ENCODE measurements at regions of chr12 and their contacts with region 1.

Region 1: GRCh38 chr12:7970475-7971252 is 34.7 kb upstream of the SLC2A3 start:
- DNase-seq: peak; percentile 92
- ATAC-seq: peak; percentile 87
- H3K4me3 Mint-ChIP-seq: peak overlapping the region; percentile 76
- H3K27ac Mint-ChIP-seq: peak overlapping the region; percentile 94
- H3K4me1 Mint-ChIP-seq: peaks cover 26% of the 10 kb centered on the region
- H3K27me3 Mint-ChIP-seq: no peaks in the 10 kb centered on the region
- CTCF ChIP-seq: peak; percentile 47

Region 2: GRCh38 chr12:7948589-7949260 is 21.9 kb before region 1 on chr12:
- CTCF ChIA-PET with region 1: no interaction called
- POLR2A ChIA-PET with region 1: no interaction called
- intact Hi-C with region 1: no loop called
- DNase-seq: no peak
- ATAC-seq: no peak
- H3K4me3 Mint-ChIP-seq: no peak overlapping the region
- H3K27ac Mint-ChIP-seq: no peak overlapping the region
- H3K4me1 Mint-ChIP-seq: peaks cover 4% of the 10 kb centered on the region
- H3K27me3 Mint-ChIP-seq: no peaks in the 10 kb centered on the region
- CTCF ChIP-seq: no peak

Region 3: GRCh38 chr12:7959701-7960121 is 11.0 kb before region 1 on chr12:
- CTCF ChIA-PET with region 1: interaction called, 20 read pairs
- POLR2A ChIA-PET with region 1: interaction called, 34 read pairs
- intact Hi-C with region 1: no loop called
- DNase-seq: peak; percentile 63
- ATAC-seq: peak; percentile 43
- H3K4me3 Mint-ChIP-seq: peak overlapping the region; percentile 97
- H3K27ac Mint-ChIP-seq: peak overlapping the region; percentile 98
- H3K4me1 Mint-ChIP-seq: peaks cover 35% of the 10 kb centered on the region
- H3K27me3 Mint-ChIP-seq: no peaks in the 10 kb centered on the region
- CTCF ChIP-seq: no peak

Region 4: GRCh38 chr12:7989827-7990551 is 19.3 kb after region 1 on chr12:
- CTCF ChIA-PET with region 1: interaction called, 13 read pairs
- POLR2A ChIA-PET with region 1: interaction called, 11 read pairs
- intact Hi-C with region 1: no loop called
- DNase-seq: peak; percentile 93
- ATAC-seq: peak; percentile 94
- H3K4me3 Mint-ChIP-seq: peak overlapping the region; percentile 51
- H3K27ac Mint-ChIP-seq: peak overlapping the region; percentile 84
- H3K4me1 Mint-ChIP-seq: peaks cover 34% of the 10 kb centered on the region
- H3K27me3 Mint-ChIP-seq: no peaks in the 10 kb centered on the region
- CTCF ChIP-seq: no peak

Region 5: DNA sequence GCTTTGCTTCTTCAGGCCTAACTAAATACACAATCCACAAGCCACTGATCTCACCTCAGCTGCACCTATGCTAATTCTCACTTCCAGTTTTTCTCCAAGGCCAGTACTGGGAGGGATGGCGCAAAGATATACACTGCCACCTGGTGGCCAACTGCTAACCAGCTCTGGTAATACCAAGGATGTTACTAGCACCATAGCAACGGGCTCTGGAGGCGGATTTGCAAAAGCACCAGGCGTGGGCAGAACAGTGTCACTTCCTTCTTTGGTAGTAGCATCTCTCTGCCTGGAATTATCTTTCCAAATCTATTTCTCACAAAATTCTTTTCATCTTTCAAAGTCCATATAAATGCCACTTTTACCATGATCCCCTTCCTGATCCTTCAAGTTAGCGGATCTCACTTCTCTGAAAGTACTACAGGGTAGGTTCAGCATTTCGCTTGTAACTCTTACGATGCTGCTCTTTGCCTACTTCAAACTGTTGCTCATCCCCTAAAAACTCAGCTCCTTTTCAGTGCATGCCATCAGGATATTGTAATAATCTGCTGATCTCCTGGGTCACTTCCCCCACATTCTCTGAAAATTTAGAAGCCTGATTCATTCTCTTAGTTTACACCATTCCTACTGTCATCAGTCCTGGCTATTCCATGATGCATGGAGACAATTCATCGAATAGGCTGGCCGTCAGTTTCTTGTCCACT is 24.8 kb after region 1 on chr12:
- CTCF ChIA-PET with region 1: interaction called, 13 read pairs
- POLR2A ChIA-PET with region 1: interaction called, 11 read pairs
- intact Hi-C with region 1: no loop called
- DNase-seq: peak; percentile 96
- ATAC-seq: peak; percentile 90
- H3K4me3 Mint-ChIP-seq: no peak overlapping the region
- H3K27ac Mint-ChIP-seq: no peak overlapping the region
- H3K4me1 Mint-ChIP-seq: peaks cover 22% of the 10 kb centered on the region
- H3K27me3 Mint-ChIP-seq: no peaks in the 10 kb centered on the region
- CTCF ChIP-seq: peak; percentile 82

Region 6: DNA sequence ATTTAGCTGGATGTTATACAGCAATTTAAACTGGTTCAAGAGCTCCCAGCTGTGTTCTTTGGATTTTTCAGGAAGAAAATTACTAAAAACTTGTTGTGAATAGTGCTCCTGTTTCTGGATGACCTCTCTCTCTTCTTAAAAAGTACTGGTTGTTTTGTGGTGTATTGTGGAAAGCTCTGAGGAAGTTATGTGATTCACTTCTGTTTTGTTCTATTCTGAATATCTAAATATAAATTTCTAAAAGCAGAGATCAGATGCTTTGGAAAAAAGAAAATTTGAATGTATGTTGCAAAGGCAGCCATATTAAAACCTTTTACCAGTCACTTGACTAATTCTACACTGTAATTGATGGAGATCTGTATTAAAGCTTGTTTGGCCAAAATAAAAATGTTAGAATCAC is 98.9 kb after region 1 on chr12:
- CTCF ChIA-PET with region 1: no interaction called
- POLR2A ChIA-PET with region 1: no interaction called
- intact Hi-C with region 1: no loop called
- DNase-seq: no peak
- ATAC-seq: no peak
- H3K4me3 Mint-ChIP-seq: no peak overlapping the region
- H3K27ac Mint-ChIP-seq: no peak overlapping the region
- H3K4me1 Mint-ChIP-seq: peaks cover 29% of the 10 kb centered on the region
- H3K27me3 Mint-ChIP-seq: no peaks in the 10 kb centered on the region
- CTCF ChIP-seq: no peak

Measured in activated CD8-positive, alpha-beta T cell treated with anti-CD3 and anti-CD28 coated beads for 36 hours (primary cell).